ENCODE measurements at regions of chr12 and their contacts with region 1.

Region 1: GRCh38 chr12:54853995-54854566 is at the start of gene MUCL1:
- DNase-seq: peak; percentile 71
- H3K4me3 ChIP-seq: no peak within 1 kb of the TSS
- H3K27ac ChIP-seq: no peak within 1 kb of the TSS
- H3K4me1 ChIP-seq: no peaks in the 10 kb centered on the region
- H3K27me3 ChIP-seq: no peaks in the 10 kb centered on the region
- CTCF ChIP-seq: peak; percentile 93 to 96
- total RNA-seq, gene MUCL1: not detected

Region 2: GRCh38 chr12:54701940-54702592 is 152.0 kb before region 1 on chr12:
- CTCF ChIA-PET with region 1: no interaction called
- dilution Hi-C with region 1: no loop called
- in situ Hi-C with region 1: no loop called
- intact Hi-C with region 1: loop called (anchors 2 kb)
- DNase-seq: peak; percentile 12
- H3K4me3 ChIP-seq: no peak overlapping the region
- H3K27ac ChIP-seq: no peak overlapping the region
- H3K4me1 ChIP-seq: no peaks in the 10 kb centered on the region
- H3K27me3 ChIP-seq: no peaks in the 10 kb centered on the region
- CTCF ChIP-seq: peak; percentile 51 to 61

Region 3: DNA sequence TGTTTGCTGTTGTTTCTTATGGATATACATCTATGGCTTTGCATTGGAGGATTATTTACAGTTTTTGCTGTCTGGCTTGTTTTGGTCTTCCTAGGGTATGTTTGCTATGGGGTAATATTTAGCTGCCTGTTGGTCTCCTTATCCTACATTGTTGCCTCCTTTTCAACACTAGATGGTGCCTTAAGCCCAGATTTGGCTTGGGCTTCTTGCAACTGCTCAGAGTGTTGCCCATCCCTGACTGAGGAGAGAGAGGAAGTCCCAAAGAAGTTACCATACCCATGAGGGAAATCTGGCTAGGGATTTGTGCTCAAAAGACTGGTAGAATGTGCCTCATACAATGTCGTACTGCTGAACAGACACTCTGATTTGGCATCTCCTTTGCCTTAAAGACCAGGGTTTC is 94.3 kb before region 1 on chr12:
- CTCF ChIA-PET with region 1: no interaction called
- dilution Hi-C with region 1: no loop called
- in situ Hi-C with region 1: no loop called
- intact Hi-C with region 1: loop called (anchors 1 kb)
- DNase-seq: peak; percentile 52
- H3K4me3 ChIP-seq: no peak overlapping the region
- H3K27ac ChIP-seq: no peak overlapping the region
- H3K4me1 ChIP-seq: no peaks in the 10 kb centered on the region
- H3K27me3 ChIP-seq: no peaks in the 10 kb centered on the region
- CTCF ChIP-seq: peak; percentile 43 to 70

Region 4: GRCh38 chr12:54935235-54935951 is 81.3 kb after region 1 on chr12:
- CTCF ChIA-PET with region 1: no interaction called
- dilution Hi-C with region 1: no loop called
- in situ Hi-C with region 1: loop called in 1 of 2 experiments (anchors 10 kb)
- intact Hi-C with region 1: loop called (anchors 1 kb)
- DNase-seq: peak; percentile 96
- H3K4me3 ChIP-seq: no peak overlapping the region
- H3K27ac ChIP-seq: peak overlapping the region; percentile 95
- H3K4me1 ChIP-seq: peaks cover 55% of the 10 kb centered on the region
- H3K27me3 ChIP-seq: no peaks in the 10 kb centered on the region
- CTCF ChIP-seq: peak in 1 of 2 donors; percentile 19

Region 5: GRCh38 chr12:54950071-54950727 is 96.1 kb after region 1 on chr12:
- CTCF ChIA-PET with region 1: no interaction called
- dilution Hi-C with region 1: no loop called
- in situ Hi-C with region 1: loop called in 1 of 2 experiments (anchors 5 kb)
- intact Hi-C with region 1: no loop called
- DNase-seq: no peak
- H3K4me3 ChIP-seq: no peak overlapping the region
- H3K27ac ChIP-seq: no peak overlapping the region
- H3K4me1 ChIP-seq: no peaks in the 10 kb centered on the region
- H3K27me3 ChIP-seq: no peaks in the 10 kb centered on the region
- CTCF ChIP-seq: no peak

Region 6: GRCh38 chr12:55554296-55554695 is 700.2 kb after region 1 on chr12:
- CTCF ChIA-PET with region 1: no interaction called
- dilution Hi-C with region 1: no loop called
- in situ Hi-C with region 1: no loop called
- intact Hi-C with region 1: no loop called
- DNase-seq: no peak
- H3K4me3 ChIP-seq: no peak overlapping the region
- H3K27ac ChIP-seq: no peak overlapping the region
- H3K4me1 ChIP-seq: no peaks in the 10 kb centered on the region
- H3K27me3 ChIP-seq: no peaks in the 10 kb centered on the region
- CTCF ChIP-seq: no peak